Motor neuron (in vitro differentiated cells): ENCODE measurements at regions of chr7 and their contacts with region 1.

Region 1: GRCh38 chr7:30671793-30672465 is 10.3 kb downstream of the CRHR2 start:
- ATAC-seq: peak in 5 of 8 experiments; percentile 28 to 95 (median 85)
- H3K4me3 ChIP-seq: no peak overlapping the region
- H3K27ac ChIP-seq: no peak overlapping the region
- H3K4me1 ChIP-seq: no peaks in the 10 kb centered on the region

Region 2: GRCh38 chr7:30727061-30727945 is 55.4 kb after region 1 on chr7:
- in situ Hi-C with region 1: loop called in 1 of 9 experiments (anchors 10 kb)
- ATAC-seq: peak; percentile 52 to 94 (median 62)
- H3K4me3 ChIP-seq: no peak overlapping the region
- H3K27ac ChIP-seq: peak overlapping the region; percentile 8 to 16
- H3K4me1 ChIP-seq: peaks cover 33 to 34% of the 10 kb centered on the region in 2 donors